Heart right ventricle (tissue), 16 donors: ENCODE measurements at regions of chr9 and their contacts with region 1.

Region 1: DNA sequence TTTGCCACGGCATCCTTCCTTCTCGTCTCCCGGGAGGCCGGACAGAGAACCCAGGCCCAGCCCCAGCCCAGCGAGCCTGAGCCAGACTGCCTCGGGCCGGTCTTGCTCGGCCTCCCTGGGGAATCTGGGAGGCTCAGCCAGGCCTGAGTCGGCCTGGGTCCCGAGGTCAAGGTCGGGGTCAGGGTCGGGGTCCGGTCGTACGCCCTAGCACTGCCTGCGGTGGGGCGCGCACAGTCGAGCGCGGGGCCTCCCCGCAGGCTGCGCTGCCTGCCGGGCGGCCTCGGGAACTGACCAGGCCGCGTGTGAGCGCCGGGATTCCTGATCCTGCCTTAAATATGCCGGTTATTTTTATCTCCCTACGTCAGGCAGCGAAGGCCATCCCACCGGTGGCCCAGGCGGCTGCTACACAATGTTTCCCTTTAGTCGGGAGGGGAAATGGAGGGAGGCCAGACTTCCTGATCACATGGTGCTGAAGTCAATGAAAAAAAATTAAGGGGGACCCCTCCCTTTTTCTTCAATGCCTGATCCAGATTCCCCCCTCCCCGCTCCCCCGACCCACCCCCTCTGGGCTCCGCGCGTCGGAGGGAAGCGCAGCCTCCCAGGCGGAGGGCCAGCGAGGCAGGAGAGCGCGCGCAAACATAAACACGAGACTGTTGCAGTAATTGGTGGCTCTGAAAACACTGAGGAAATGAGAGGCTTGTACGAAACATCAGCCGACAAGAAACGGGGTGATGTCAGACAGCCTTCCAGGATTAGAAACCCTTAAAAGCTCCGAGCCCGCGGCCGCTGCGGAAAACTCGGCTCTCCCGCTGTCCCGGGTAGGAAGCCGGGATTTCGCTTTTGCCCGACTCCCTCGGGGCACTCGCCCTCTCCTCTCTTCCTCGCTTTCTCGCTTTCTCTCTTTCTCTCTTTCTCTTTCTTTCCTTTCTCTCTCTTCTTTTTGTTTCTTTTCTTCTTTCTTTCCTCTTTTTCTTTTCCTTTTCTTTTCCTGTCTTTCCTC is 148.2 kb upstream of the KLF4 start:
- DNase-seq: peak; percentile 89 to 97
- ATAC-seq: peak; percentile 92 to 97 (median 94)
- H3K4me3 ChIP-seq: peak overlapping the region; percentile 11 to 60 (median 47)
- H3K27ac ChIP-seq: peak overlapping the region; percentile 88 to 100 (median 98)
- H3K4me1 ChIP-seq: peaks cover 2 to 44% (median 16%) of the 10 kb centered on the region in 9 donors
- H3K27me3 ChIP-seq: no peaks in the 10 kb centered on the region
- CTCF ChIP-seq: peak in 6 of 9 donors; percentile 22 to 52 (median 42)

Region 2: DNA sequence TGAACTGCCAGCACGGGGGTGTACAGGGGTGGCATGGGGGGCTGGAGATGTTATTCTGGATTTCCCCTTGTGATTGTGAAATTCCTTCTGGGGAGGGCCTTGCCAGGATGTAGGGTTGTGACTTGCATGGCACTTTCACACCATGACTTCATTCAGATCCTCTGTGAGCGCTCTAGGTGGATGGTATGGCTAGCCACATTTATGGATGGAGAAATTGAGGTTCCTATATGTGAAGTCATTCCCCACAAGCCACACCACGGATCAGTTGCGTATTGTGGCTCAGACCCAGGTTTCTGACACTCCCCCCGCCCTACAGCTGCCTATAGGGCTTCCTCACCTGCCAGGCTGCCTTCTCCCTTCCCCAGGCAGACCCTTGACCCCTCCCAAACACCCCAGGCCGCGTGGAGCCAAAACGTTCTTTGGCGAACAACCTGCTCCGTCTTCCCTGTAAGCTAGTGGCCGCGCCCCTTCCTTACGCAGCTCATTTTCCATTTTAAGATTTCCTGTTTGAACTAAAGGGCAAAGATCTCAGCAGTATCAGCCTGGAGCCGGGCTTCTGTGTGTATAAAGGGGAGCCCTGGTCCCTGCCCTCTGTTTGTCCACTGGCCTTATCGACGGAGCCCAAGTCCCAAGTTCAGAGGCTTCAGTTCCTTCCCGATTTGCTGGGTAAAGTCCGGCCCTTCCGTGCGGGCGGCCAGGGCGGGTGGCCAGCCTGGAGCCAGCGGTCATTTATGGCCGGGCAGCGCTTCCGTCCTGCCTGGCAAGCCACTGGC is 50.3 kb before region 1 on chr9:
- intact Hi-C with region 1: loop called in 3 of 10 experiments (anchors 5 kb)
- DNase-seq: peak; percentile 60 to 82
- ATAC-seq: peak; percentile 75 to 95 (median 92)
- H3K4me3 ChIP-seq: peak overlapping the region in 7 of 10 donors; percentile 18 to 43 (median 41)
- H3K27ac ChIP-seq: peak overlapping the region; percentile 72 to 89 (median 81)
- H3K4me1 ChIP-seq: peaks cover 0 to 36% (median 12%) of the 10 kb centered on the region in 9 donors
- H3K27me3 ChIP-seq: no peaks in the 10 kb centered on the region
- CTCF ChIP-seq: no peak

Region 3: DNA sequence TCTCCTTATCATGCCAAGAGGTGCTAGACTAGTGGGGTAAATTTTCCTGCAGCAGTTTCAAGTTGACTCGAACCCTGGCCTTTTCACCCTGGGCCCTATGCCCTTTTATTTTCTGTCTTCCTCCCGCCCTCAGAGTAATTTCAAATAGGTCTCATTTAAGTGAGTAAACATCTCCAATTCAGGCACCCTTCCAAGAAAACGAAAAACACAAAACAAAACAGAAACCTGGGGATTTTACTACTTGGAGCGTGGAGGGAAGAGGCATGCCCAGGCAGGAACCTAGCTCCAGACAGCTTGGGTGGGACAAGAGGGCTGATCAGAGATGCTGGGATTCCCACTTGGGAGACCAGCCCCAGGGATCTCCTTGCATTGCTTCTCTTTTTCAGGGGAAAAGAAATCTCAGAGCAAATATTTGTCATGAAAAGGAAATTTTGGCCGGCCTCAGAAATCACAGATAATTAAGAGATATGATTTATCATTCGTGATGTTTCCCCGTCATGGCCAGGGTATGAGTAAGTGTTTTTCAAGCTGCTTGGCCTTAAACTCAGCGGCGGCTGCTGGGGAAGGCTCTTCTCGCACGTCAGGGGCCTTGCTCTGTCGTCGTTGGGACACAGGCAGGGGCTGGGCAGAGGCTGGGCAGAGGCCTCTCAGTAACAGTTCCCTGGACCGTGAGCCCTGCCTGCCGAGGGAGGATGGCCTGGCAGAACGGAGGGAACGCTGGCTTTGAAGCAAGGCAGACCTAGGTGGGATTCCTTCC is 100.4 kb after region 1 on chr9:
- intact Hi-C with region 1: loop called in 4 of 10 experiments (anchors 5 to 10 kb)
- DNase-seq: peak; percentile 46 to 68
- ATAC-seq: peak; percentile 24 to 76 (median 40)
- H3K4me3 ChIP-seq: no peak overlapping the region
- H3K27ac ChIP-seq: peak overlapping the region in 9 of 10 donors; percentile 13 to 76 (median 69)
- H3K4me1 ChIP-seq: peaks cover 0 to 53% (median 45%) of the 10 kb centered on the region in 9 donors
- H3K27me3 ChIP-seq: no peaks in the 10 kb centered on the region
- CTCF ChIP-seq: no peak

Region 4: GRCh38 chr9:108149326-108149725 is 511.6 kb after region 1 on chr9:
- intact Hi-C with region 1: loop called in 2 of 10 experiments (anchors 5 to 10 kb)
- DNase-seq: no peak
- ATAC-seq: no peak
- H3K4me3 ChIP-seq: no peak overlapping the region
- H3K27ac ChIP-seq: peak overlapping the region in 1 of 10 donors; percentile 71
- H3K4me1 ChIP-seq: peaks cover 0 to 28% (median 17%) of the 10 kb centered on the region in 9 donors
- H3K27me3 ChIP-seq: no peaks in the 10 kb centered on the region
- CTCF ChIP-seq: no peak